Endothelial cell of umbilical vein (primary cell): ENCODE measurements at regions of chr14 and their contacts with region 1.

Region 1: GRCh38 chr14:34098045-34098984 is 147.4 kb upstream of the EGLN3 start:
- DNase-seq: peak; percentile 43
- H3K4me3 ChIP-seq: no peak overlapping the region
- H3K27ac ChIP-seq: no peak overlapping the region
- H3K4me1 ChIP-seq: no peaks in the 10 kb centered on the region
- H3K27me3 ChIP-seq: no peaks in the 10 kb centered on the region
- CTCF ChIP-seq: peak; percentile 44 to 46
- POLR2A ChIP-seq: no peak

Region 2: DNA sequence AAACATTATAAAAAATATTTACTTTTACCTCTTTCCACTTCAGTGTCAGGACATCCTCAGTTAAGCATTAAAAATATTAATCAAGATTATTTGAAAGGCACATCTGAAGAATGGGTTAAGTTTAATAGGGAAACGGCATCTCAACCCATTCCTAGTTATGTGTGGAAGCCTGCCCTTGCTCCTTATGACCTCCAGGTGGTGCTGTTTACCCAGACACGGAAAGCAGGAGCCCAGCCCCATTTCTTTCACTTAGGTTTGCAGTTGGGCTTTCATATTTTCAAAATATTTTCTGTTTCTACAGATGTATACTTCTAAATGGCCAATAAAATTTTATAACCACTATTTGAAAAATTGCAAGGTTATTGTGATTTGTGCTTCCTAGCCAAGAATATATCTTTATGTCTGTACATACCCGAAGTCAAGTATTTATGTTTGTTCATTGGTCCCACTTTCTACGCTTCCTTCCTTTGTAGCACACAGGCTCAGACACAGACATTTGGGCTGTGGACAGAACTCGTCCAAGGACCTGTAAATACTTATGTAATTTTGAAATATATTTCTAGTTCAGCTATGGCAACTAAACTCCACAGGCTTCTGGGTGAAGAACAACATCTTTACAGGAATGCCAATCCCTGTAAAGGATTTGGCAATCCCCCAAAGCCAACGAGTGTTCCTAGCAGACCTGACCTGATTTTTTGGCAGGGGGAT is 1522.1 kb before region 1 on chr14:
- CTCF ChIA-PET with region 1: interaction called, 5 read pairs
- POLR2A ChIA-PET with region 1: no interaction called
- dilution Hi-C with region 1: no loop called
- intact Hi-C with region 1: loop called (anchors 1 kb)
- DNase-seq: peak; percentile 57
- H3K4me3 ChIP-seq: no peak overlapping the region
- H3K27ac ChIP-seq: no peak overlapping the region
- H3K4me1 ChIP-seq: no peaks in the 10 kb centered on the region
- H3K27me3 ChIP-seq: peaks cover 20 to 41% of the 10 kb centered on the region in 2 experiments
- CTCF ChIP-seq: peak; percentile 87 to 92
- POLR2A ChIP-seq: no peak

Region 3: GRCh38 chr14:33848706-33849454 is 249.4 kb before region 1 on chr14:
- CTCF ChIA-PET with region 1: interaction called, 407 read pairs
- POLR2A ChIA-PET with region 1: no interaction called
- dilution Hi-C with region 1: no loop called
- intact Hi-C with region 1: loop called (anchors 1 kb)
- DNase-seq: peak; percentile 48
- H3K4me3 ChIP-seq: no peak overlapping the region
- H3K27ac ChIP-seq: no peak overlapping the region
- H3K4me1 ChIP-seq: no peaks in the 10 kb centered on the region
- H3K27me3 ChIP-seq: no peaks in the 10 kb centered on the region
- CTCF ChIP-seq: peak; percentile 63 to 82
- POLR2A ChIP-seq: no peak

Region 4: GRCh38 chr14:34059855-34060638 is 38.3 kb before region 1 on chr14:
- CTCF ChIA-PET with region 1: interaction called, 21 read pairs
- POLR2A ChIA-PET with region 1: no interaction called
- dilution Hi-C with region 1: no loop called
- intact Hi-C with region 1: no loop called
- DNase-seq: peak; percentile 67
- H3K4me3 ChIP-seq: peak overlapping the region; percentile 40 to 64 (median 53)
- H3K27ac ChIP-seq: peak overlapping the region; percentile 31
- H3K4me1 ChIP-seq: no peaks in the 10 kb centered on the region
- H3K27me3 ChIP-seq: peaks cover 0 to 7% of the 10 kb centered on the region in 2 experiments
- CTCF ChIP-seq: peak; percentile 15 to 44
- POLR2A ChIP-seq: peak; percentile 39

Region 5: DNA sequence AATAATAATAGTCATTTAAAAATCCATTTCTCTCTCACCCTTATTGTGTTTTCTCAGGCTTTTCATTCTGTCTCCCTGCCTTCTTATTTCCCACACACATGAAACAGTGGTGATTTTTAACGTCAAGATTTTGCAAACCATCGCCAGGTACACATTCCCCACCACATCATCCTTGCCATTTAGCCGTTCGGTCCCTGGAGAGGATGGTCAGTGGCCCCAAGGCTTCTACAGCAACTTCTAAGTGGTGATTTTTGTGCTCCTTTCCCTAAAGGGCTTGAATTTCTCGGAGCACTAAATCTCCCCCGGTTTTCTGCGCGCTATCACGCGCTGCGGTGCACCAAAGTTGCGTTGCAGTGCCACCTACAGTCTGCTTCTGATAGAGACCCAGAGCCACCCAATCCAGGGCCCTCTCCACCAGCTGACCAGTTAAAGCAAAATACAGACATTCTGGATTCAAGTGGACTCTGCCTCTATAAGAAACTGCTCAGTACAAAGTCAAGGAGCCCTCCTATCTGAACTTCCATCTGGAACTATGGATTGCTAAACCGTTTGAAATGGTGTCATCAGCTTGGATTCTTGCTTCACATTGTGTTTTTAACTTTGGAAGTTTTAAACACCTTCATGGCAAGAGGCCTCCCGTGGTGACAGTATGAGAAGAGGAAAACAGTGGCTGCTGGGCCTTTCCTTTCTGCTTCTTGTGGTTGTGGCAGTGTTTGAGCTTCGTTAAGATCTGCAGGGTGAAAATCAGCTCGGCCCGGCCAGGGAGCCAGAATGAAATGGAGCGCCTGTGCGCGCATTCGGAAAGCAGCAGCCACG is 129.7 kb after region 1 on chr14:
- CTCF ChIA-PET with region 1: interaction called, 8 read pairs
- POLR2A ChIA-PET with region 1: no interaction called
- dilution Hi-C with region 1: no loop called
- intact Hi-C with region 1: loop called (anchors 5 kb)
- DNase-seq: peak; percentile 50
- H3K4me3 ChIP-seq: no peak overlapping the region
- H3K27ac ChIP-seq: no peak overlapping the region
- H3K4me1 ChIP-seq: no peaks in the 10 kb centered on the region
- H3K27me3 ChIP-seq: peaks cover 3 to 4% of the 10 kb centered on the region in 2 experiments
- CTCF ChIP-seq: peak; percentile 74 to 83
- POLR2A ChIP-seq: no peak

Region 6: GRCh38 chr14:34436118-34436880 is 338.0 kb after region 1 on chr14:
- CTCF ChIA-PET with region 1: no interaction called
- POLR2A ChIA-PET with region 1: no interaction called
- dilution Hi-C with region 1: no loop called
- intact Hi-C with region 1: no loop called
- DNase-seq: peak; percentile 37
- H3K4me3 ChIP-seq: no peak overlapping the region
- H3K27ac ChIP-seq: no peak overlapping the region
- H3K4me1 ChIP-seq: peaks cover 14% of the 10 kb centered on the region
- H3K27me3 ChIP-seq: no peaks in the 10 kb centered on the region
- CTCF ChIP-seq: no peak
- POLR2A ChIP-seq: no peak